CD8-positive, alpha-beta memory T cell (primary cell): ENCODE measurements at regions of chr10 and their contacts with region 1.

Region 1: GRCh38 chr10:102522874-102523249 is 19.1 kb downstream of the SUFU start:
- DNase-seq: no peak
- H3K4me3 ChIP-seq: no peak overlapping the region
- H3K4me3 Mint-ChIP-seq: no peak overlapping the region
- H3K27ac ChIP-seq: no peak overlapping the region
- H3K27ac Mint-ChIP-seq: peak overlapping the region in 2 of 8 donors; percentile 28 to 75
- H3K4me1 ChIP-seq: no peaks in the 10 kb centered on the region
- H3K4me1 Mint-ChIP-seq: peaks cover 13 to 23% (median 17%) of the 10 kb centered on the region in 3 donors
- H3K27me3 ChIP-seq: no peaks in the 10 kb centered on the region
- H3K27me3 Mint-ChIP-seq: no peaks in the 10 kb centered on the region

Region 2: GRCh38 chr10:102438374-102438773 is 84.5 kb before region 1 on chr10:
- CTCF ChIA-PET with region 1: no interaction called
- POLR2A ChIA-PET with region 1: interaction called, 10 read pairs
- DNase-seq: no peak
- H3K4me3 ChIP-seq: no peak overlapping the region
- H3K4me3 Mint-ChIP-seq: no peak overlapping the region
- H3K27ac ChIP-seq: no peak overlapping the region
- H3K27ac Mint-ChIP-seq: peak overlapping the region in 2 of 8 donors; percentile 21 to 50
- H3K4me1 ChIP-seq: peaks cover 35% of the 10 kb centered on the region
- H3K4me1 Mint-ChIP-seq: peaks cover 22 to 39% (median 37%) of the 10 kb centered on the region in 3 donors
- H3K27me3 ChIP-seq: no peaks in the 10 kb centered on the region
- H3K27me3 Mint-ChIP-seq: peaks cover 0 to 8% of the 10 kb centered on the region in 2 donors

Region 3: GRCh38 chr10:102596506-102596971 is 73.7 kb after region 1 on chr10:
- CTCF ChIA-PET with region 1: no interaction called
- POLR2A ChIA-PET with region 1: no interaction called
- DNase-seq: no peak
- H3K4me3 ChIP-seq: no peak overlapping the region
- H3K4me3 Mint-ChIP-seq: no peak overlapping the region
- H3K27ac ChIP-seq: no peak overlapping the region
- H3K27ac Mint-ChIP-seq: peak overlapping the region in 1 of 8 donors; percentile 43
- H3K4me1 ChIP-seq: no peaks in the 10 kb centered on the region
- H3K4me1 Mint-ChIP-seq: no peaks in the 10 kb centered on the region
- H3K27me3 ChIP-seq: no peaks in the 10 kb centered on the region
- H3K27me3 Mint-ChIP-seq: no peaks in the 10 kb centered on the region

Region 4: DNA sequence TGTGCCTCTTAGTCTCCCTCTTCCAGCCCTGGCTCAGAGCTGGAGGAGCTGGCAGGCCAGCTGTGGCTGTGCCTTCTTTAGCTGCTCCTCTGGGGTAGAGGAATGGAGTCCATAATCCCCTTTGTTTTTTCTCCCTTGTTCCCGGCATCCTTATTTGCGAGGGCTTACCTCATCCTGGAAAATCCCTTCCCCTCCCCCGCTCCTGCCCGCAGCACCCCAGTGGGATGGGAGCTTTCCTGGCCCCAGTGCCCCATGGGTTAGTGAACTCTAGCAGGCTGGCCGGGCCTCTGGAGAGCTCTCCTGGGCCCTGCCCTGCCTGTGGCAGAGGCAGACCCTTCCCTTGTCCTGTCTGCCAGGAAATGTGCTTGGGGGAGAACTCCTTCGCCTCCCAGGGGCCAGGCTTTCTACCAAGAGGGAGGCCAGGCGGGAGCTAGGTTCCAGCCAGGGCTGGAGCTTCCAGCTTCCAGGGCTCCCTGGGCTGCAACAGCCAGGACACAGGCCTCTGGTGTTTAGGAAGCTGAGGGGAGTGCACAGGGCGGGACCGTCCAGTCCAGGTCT is 105.0 kb after region 1 on chr10:
- CTCF ChIA-PET with region 1: no interaction called
- POLR2A ChIA-PET with region 1: no interaction called
- DNase-seq: no peak
- H3K4me3 ChIP-seq: no peak overlapping the region
- H3K4me3 Mint-ChIP-seq: no peak overlapping the region
- H3K27ac ChIP-seq: no peak overlapping the region
- H3K27ac Mint-ChIP-seq: peak overlapping the region in 1 of 8 donors; percentile 33
- H3K4me1 ChIP-seq: peaks cover 6% of the 10 kb centered on the region
- H3K4me1 Mint-ChIP-seq: peaks cover 6 to 10% (median 9%) of the 10 kb centered on the region in 3 donors
- H3K27me3 ChIP-seq: no peaks in the 10 kb centered on the region
- H3K27me3 Mint-ChIP-seq: no peaks in the 10 kb centered on the region